A549 (cell line): ENCODE measurements at regions of chr14 and their contacts with region 1.

Region 1: GRCh38 chr14:80055667-80056496 is 155.4 kb downstream of the DIO2 start:
- DNase-seq: peak; percentile 25 to 75
- ATAC-seq: peak; percentile 92 to 95
- H3K4me3 ChIP-seq: no peak overlapping the region
- H3K27ac ChIP-seq: peak overlapping the region; percentile 32 to 56; a peak in 4 of 6 replicates
- H3K4me1 ChIP-seq: peaks cover 20% of the 10 kb centered on the region
- CTCF ChIP-seq: peak; percentile 85
- EP300 ChIP-seq: no peak
- POLR2A ChIP-seq: no peak
- RAD21 ChIP-seq: peak; percentile 96 to 97

Region 2: GRCh38 chr14:80078501-80078900 is 22.6 kb after region 1 on chr14:
- CTCF ChIA-PET with region 1: interaction called, 10 read pairs
- POLR2A ChIA-PET with region 1: no interaction called
- DNase-seq: no peak
- ATAC-seq: no peak
- H3K4me3 ChIP-seq: no peak overlapping the region
- H3K27ac ChIP-seq: no peak overlapping the region
- H3K4me1 ChIP-seq: no peaks in the 10 kb centered on the region
- CTCF ChIP-seq: no peak
- EP300 ChIP-seq: no peak
- POLR2A ChIP-seq: no peak
- RAD21 ChIP-seq: no peak

Region 3: GRCh38 chr14:80136361-80136760 is 80.5 kb after region 1 on chr14:
- CTCF ChIA-PET with region 1: no interaction called
- POLR2A ChIA-PET with region 1: no interaction called
- DNase-seq: peak in 1 of 2 experiments; percentile 53
- ATAC-seq: 0 out of 6 replicates have a peak, but pooled peaks of 1 of the 2 experiments have one; percentile 13
- H3K4me3 ChIP-seq: no peak overlapping the region
- H3K27ac ChIP-seq: no peak overlapping the region
- H3K4me1 ChIP-seq: no peaks in the 10 kb centered on the region
- CTCF ChIP-seq: no peak
- EP300 ChIP-seq: no peak
- POLR2A ChIP-seq: no peak
- RAD21 ChIP-seq: no peak

Region 4: DNA sequence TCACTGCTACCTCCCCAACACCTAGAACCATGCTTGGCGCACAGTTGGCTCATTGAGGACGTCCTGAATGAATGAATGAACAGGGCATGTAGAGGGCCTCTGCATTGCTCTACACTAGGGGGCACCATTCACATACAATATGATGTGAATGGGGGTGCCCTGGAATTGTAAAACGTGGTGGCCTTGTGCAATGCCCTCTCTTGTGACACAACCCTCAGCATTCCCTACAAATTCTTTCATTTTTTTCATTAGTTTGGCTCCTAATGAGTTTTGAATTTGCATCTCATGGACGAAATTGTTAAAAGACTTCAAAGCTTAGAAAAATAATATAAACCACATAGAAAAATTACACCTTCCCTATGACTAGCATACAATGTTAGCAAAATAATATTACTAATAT is 157.7 kb after region 1 on chr14:
- CTCF ChIA-PET with region 1: interaction called, 23 read pairs
- POLR2A ChIA-PET with region 1: no interaction called
- DNase-seq: peak; percentile 40 to 86
- ATAC-seq: peak in 1 of 2 experiments; percentile 7; a peak in 1 of 6 replicates
- H3K4me3 ChIP-seq: no peak overlapping the region
- H3K27ac ChIP-seq: peak overlapping the region; percentile 80 to 84
- H3K4me1 ChIP-seq: peaks cover 63% of the 10 kb centered on the region
- CTCF ChIP-seq: peak; percentile 62
- EP300 ChIP-seq: no peak
- POLR2A ChIP-seq: no peak
- RAD21 ChIP-seq: peak; percentile 73 to 89

Region 5: GRCh38 chr14:80587075-80587724 is 531.3 kb after region 1 on chr14:
- CTCF ChIA-PET with region 1: interaction called, 12 read pairs
- POLR2A ChIA-PET with region 1: no interaction called
- DNase-seq: peak in 1 of 2 experiments; percentile 65
- ATAC-seq: peak; percentile 62 to 76; a peak in 4 of 6 replicates
- H3K4me3 ChIP-seq: no peak overlapping the region
- H3K27ac ChIP-seq: 0 out of 6 replicates have a peak overlapping the region, but pooled peaks of 1 of the 2 experiments have one; percentile 31
- H3K4me1 ChIP-seq: peaks cover 21% of the 10 kb centered on the region
- CTCF ChIP-seq: peak; percentile 55
- EP300 ChIP-seq: no peak
- POLR2A ChIP-seq: no peak
- RAD21 ChIP-seq: peak; percentile 49 to 53; a peak in 1 of 5 replicates

Region 6: GRCh38 chr14:80784820-80785219 is 728.9 kb after region 1 on chr14:
- CTCF ChIA-PET with region 1: interaction called, 11 read pairs
- POLR2A ChIA-PET with region 1: no interaction called
- DNase-seq: peak in 1 of 2 experiments; percentile 26
- ATAC-seq: peak; percentile 54 to 58; a peak in 3 of 6 replicates
- H3K4me3 ChIP-seq: no peak overlapping the region
- H3K27ac ChIP-seq: no peak overlapping the region
- H3K4me1 ChIP-seq: no peaks in the 10 kb centered on the region
- CTCF ChIP-seq: no peak
- EP300 ChIP-seq: no peak
- POLR2A ChIP-seq: no peak
- RAD21 ChIP-seq: peak in 1 of 2 experiments; percentile 32; a peak in 2 of 5 replicates

Region 7: GRCh38 chr14:80850197-80850814 is 794.4 kb after region 1 on chr14:
- CTCF ChIA-PET with region 1: interaction called, 54 read pairs
- POLR2A ChIA-PET with region 1: no interaction called
- DNase-seq: peak; percentile 13 to 52
- ATAC-seq: peak; percentile 59 to 84; a peak in 3 of 6 replicates
- H3K4me3 ChIP-seq: no peak overlapping the region
- H3K27ac ChIP-seq: peak overlapping the region; percentile 1 to 21; a peak in 1 of 6 replicates
- H3K4me1 ChIP-seq: peaks cover 11% of the 10 kb centered on the region
- CTCF ChIP-seq: peak; percentile 88
- EP300 ChIP-seq: no peak
- POLR2A ChIP-seq: no peak
- RAD21 ChIP-seq: peak; percentile 86 to 95

Region 8: DNA sequence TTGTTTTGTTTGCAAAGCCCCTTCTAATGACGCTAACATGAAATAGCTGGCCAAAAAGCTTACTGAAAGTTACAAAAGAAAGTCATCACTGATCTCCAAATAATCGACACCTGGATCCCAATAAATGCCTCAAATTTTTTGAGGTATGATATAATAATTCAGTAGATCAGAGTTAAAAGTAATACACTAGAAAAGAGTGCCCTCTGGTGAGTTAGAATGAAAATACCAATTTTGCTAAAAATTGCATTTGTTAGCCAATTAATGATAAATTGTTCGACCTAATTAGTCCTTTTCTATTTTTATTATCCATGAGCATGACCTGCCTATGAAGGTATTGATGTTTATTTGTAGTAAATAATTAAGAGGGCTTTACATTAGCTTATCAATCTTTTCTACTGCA is 807.1 kb after region 1 on chr14:
- CTCF ChIA-PET with region 1: interaction called, 36 read pairs
- POLR2A ChIA-PET with region 1: no interaction called
- DNase-seq: no peak
- ATAC-seq: no peak
- H3K4me3 ChIP-seq: no peak overlapping the region
- H3K27ac ChIP-seq: no peak overlapping the region
- H3K4me1 ChIP-seq: no peaks in the 10 kb centered on the region
- CTCF ChIP-seq: peak; percentile 59
- EP300 ChIP-seq: no peak
- POLR2A ChIP-seq: no peak
- RAD21 ChIP-seq: peak; percentile 48 to 69